ENCODE measurements at regions of chr2 and their contacts with region 1.

Region 1: DNA sequence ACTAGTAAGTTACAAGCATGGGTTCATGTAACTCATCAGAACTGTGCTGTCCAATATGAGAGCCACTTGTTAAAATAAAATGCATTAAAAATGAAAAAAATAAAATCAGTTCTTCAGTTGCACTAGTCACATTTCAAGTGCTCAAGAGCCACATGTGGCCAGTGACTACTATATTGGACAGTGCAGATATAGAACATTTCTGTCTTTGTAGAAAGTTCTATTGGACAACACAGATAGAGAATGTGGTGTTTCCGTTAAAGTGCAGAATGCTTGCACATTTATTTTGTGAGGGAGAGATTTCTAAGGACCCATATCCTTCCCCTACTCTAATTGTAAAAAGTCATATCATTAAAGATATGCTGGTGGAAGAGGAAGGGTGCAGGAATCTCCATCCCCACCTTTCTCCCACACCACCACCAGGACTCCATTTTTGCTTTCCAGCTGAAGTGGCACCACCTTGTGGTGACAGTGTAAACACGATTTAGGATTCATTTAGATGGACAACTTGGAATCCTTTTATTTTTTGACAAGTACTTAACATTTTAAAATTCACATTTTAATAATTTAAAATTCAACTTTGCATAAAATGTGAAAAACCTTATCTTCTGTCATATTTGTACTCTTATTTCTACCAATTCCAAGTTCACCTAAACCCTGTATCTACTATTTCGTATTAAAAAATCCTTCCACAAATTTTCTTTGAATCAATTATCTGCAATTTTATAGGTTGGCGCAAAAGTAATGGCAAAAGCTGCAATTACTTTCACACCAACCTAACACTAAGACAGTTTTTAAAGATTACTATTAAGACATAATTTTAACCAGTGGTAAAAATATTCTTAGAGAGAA is 9.4 kb upstream of the CD302 start:
- DNase-seq: peak; percentile 43
- H3K4me3 Mint-ChIP-seq: no peak overlapping the region
- H3K27ac Mint-ChIP-seq: no peak overlapping the region
- H3K4me1 Mint-ChIP-seq: peaks cover 6% of the 10 kb centered on the region
- H3K27me3 Mint-ChIP-seq: no peaks in the 10 kb centered on the region

Region 2: GRCh38 chr2:159557451-159558034 is 249.9 kb before region 1 on chr2:
- CTCF ChIA-PET with region 1: no interaction called
- intact Hi-C with region 1: loop called (anchors 5 kb)
- DNase-seq: no peak
- H3K4me3 Mint-ChIP-seq: no peak overlapping the region
- H3K27ac Mint-ChIP-seq: no peak overlapping the region
- H3K4me1 Mint-ChIP-seq: no peaks in the 10 kb centered on the region
- H3K27me3 Mint-ChIP-seq: no peaks in the 10 kb centered on the region

Region 3: GRCh38 chr2:159755788-159756187 is 51.6 kb before region 1 on chr2:
- CTCF ChIA-PET with region 1: interaction called, 3 read pairs
- intact Hi-C with region 1: loop called (anchors 1 kb)
- DNase-seq: peak; percentile 54
- H3K4me3 Mint-ChIP-seq: no peak overlapping the region
- H3K27ac Mint-ChIP-seq: no peak overlapping the region
- H3K4me1 Mint-ChIP-seq: peaks cover 22% of the 10 kb centered on the region
- H3K27me3 Mint-ChIP-seq: no peaks in the 10 kb centered on the region

Region 4: DNA sequence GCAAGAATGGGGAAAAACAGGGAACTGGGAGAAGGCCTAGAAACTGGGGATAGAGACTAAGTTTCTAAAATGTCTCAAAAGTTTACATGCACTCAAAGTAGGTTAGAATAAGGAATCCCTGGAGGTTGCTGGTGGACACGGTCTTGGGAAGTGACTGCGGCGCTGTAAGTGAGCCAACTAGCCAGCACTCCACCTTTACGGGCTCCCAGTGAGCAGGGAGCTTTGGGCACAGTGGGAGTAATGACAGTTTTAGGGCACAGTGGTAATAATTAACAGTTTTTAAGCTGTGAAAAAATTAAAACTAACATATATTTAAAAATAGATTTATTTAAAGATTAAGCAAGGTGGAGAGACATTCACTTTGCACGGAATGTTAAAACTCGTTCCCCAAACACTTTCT is 11.5 kb after region 1 on chr2:
- CTCF ChIA-PET with region 1: no interaction called
- intact Hi-C with region 1: no loop called
- DNase-seq: no peak
- H3K4me3 Mint-ChIP-seq: no peak overlapping the region
- H3K27ac Mint-ChIP-seq: no peak overlapping the region
- H3K4me1 Mint-ChIP-seq: no peaks in the 10 kb centered on the region
- H3K27me3 Mint-ChIP-seq: no peaks in the 10 kb centered on the region